ENCODE measurements at regions of chr15 and their contacts with region 1.

Region 1: DNA sequence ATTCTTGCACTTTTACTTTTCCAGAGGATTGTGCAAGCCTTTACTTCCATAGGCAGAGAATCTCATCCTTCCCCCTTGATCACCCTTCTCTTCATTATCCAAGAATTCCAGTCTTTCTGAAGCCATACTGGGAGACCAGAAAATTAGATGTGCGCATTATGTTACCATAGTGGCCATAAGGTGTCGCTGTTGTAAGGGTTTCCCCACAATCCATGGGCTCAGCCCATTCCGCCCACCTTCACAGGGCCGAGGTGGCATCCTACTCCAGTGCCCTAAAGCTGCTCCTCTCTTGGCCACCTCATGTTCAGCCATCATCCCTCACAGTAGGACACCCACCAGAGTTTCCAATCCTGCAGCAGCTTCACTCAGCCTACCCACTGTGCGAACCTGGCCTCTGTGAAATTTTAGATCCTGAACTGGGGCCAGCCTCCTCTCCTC is 35.0 kb downstream of the CTSH start:
- DNase-seq: no peak
- H3K4me3 ChIP-seq: no peak overlapping the region
- H3K27ac ChIP-seq: no peak overlapping the region
- H3K4me1 ChIP-seq: peaks cover 2% of the 10 kb centered on the region
- H3K27me3 ChIP-seq: no peaks in the 10 kb centered on the region
- CTCF ChIP-seq: peak; percentile 67 to 75 (median 69)
- POLR2A ChIP-seq: no peak

Region 2: GRCh38 chr15:78944669-78945407 is 35.0 kb after region 1 on chr15 and contains the start of gene CTSH:
- intact Hi-C with region 1: loop called (anchors 5 kb)
- DNase-seq: peak; percentile 82
- H3K4me3 ChIP-seq: peak within 1 kb of the TSS; percentile 54 to 66
- H3K27ac ChIP-seq: peak within 1 kb of the TSS; percentile 68 to 85
- H3K4me1 ChIP-seq: no peaks in the 10 kb centered on the region
- H3K27me3 ChIP-seq: no peaks in the 10 kb centered on the region
- CTCF ChIP-seq: peak in 1 of 4 experiments; percentile 5
- POLR2A ChIP-seq: peak; percentile 98
- total RNA-seq, gene CTSH: 257 to 415 TPM

Region 3: DNA sequence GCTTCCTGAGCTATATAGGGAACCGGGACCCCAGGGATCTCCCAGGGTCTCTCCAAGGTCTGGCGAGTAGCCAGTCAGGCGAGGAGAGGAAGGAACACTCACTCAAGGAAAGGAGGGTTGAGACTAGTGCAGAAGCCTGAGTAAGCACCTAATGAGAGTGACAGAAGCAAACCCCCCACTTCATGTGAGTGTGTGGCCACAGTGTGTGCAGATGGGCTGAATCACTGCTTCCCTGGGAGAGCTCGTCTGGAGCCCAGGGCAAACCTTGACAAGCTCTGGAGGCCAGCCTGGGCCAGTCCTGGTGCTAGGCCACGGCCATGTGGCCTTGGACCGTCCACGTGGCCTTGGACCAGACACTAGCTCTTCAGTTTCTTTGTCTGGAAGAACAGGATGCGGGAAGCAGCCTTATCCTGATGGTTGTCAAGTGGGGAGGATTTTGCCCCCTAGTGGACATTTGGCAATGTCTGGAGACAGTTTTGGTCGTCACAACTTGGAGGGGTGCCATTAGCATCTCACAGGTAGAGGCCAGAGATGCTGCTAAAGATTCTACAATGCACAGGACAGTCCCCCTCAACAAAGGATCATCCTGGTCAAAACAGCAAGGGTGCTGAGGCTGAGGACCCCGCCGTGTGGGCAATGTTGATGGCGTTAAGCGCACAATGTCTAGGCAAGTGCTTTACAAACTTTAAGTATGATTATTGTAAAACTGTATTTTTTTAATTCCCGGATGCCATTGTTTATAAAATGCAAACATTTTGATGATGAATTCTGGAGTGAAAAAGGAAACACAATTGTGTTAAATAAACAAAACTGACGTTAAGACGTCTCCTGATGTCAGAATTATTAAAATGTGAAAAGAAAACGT is 69.9 kb after region 1 on chr15:
- intact Hi-C with region 1: loop called (anchors 2 kb)
- DNase-seq: peak; percentile 88
- H3K4me3 ChIP-seq: no peak overlapping the region
- H3K27ac ChIP-seq: no peak overlapping the region
- H3K4me1 ChIP-seq: no peaks in the 10 kb centered on the region
- H3K27me3 ChIP-seq: no peaks in the 10 kb centered on the region
- CTCF ChIP-seq: peak; percentile 64 to 90 (median 88)
- POLR2A ChIP-seq: no peak

Region 4: DNA sequence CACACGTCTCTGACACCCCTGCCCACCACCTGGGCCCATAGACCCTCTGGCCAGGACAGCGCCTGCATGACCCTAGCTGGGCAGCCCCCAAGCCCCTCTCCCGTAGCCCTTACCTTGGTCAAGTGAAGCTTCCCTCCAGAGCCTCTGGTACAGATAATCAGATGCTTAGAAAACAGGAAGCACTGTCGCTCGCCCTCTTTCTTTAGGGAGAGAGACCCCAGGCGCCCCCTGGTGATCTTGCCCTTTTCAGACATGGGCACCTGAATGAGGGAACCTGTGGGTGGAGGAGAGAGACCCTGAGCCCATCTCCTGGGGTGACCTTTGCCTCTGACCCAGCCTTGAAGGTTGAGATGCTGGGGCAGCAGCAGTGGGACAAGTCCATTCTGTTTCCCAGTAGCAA is 115.4 kb after region 1 on chr15:
- intact Hi-C with region 1: no loop called
- DNase-seq: no peak
- H3K4me3 ChIP-seq: no peak overlapping the region
- H3K27ac ChIP-seq: no peak overlapping the region
- H3K4me1 ChIP-seq: no peaks in the 10 kb centered on the region
- H3K27me3 ChIP-seq: no peaks in the 10 kb centered on the region
- CTCF ChIP-seq: no peak
- POLR2A ChIP-seq: no peak

Region 5: GRCh38 chr15:79184465-79184892 is 274.7 kb after region 1 on chr15:
- intact Hi-C with region 1: loop called (anchors 10 kb)
- DNase-seq: peak; percentile 65
- H3K4me3 ChIP-seq: no peak overlapping the region
- H3K27ac ChIP-seq: no peak overlapping the region
- H3K4me1 ChIP-seq: no peaks in the 10 kb centered on the region
- H3K27me3 ChIP-seq: no peaks in the 10 kb centered on the region
- CTCF ChIP-seq: peak; percentile 92 to 99 (median 94)
- POLR2A ChIP-seq: no peak